Activated CD4-positive, alpha-beta memory T cell treated with anti-CD3 and anti-CD28 coated beads for 36 hours (primary cell): ENCODE measurements at regions of chr1 and their contacts with region 1.

Region 1: DNA sequence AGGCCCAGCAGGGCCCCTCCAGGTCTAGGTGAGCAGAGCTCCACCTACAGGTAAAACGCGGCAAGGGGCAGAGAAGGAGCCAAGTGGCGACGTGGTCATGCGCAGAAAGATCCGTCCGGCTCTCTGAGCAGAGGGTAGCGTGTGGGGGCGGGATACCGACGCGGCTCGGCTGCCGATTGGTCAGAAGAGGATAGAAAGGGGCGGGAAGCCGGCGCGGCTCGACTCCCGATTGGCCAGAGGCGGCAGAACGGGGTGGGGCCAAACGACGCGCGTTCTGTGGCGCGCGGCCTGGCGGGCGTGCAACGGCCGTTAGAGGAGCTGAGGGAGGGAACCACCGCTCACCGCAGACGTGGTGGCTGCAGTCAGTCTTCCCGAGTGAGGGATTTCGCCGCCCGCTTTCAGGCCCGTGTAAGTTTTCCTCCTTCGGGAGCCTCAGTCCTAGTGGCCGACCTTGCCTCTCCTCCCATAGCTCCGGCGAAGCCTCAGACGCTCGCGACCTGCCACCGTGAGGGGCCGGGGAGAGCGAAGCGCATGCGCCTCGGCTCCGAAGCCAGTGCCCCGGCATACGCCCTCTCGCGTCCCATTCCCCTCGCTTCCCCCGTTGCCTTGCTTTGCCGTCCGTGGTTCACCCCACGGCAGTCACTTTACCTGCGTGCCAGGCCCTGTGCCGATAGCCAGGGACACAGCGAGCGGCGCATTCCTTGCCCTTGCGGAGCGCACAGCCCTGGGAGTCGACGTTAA is at the start of gene CEP85:
- DNase-seq: peak; percentile 99
- H3K4me3 Mint-ChIP-seq: peak within 1 kb of the TSS; percentile 96
- H3K27ac Mint-ChIP-seq: peak within 1 kb of the TSS; percentile 86
- H3K4me1 Mint-ChIP-seq: peaks cover 36% of the 10 kb centered on the region
- H3K27me3 Mint-ChIP-seq: no peaks in the 10 kb centered on the region
- total RNA-seq, gene CEP85: 30.3 to 32.6 TPM

Region 2: GRCh38 chr1:25971066-25971810 is 262.8 kb before region 1 on chr1:
- CTCF ChIA-PET with region 1: no interaction called
- POLR2A ChIA-PET with region 1: no interaction called
- intact Hi-C with region 1: no loop called
- DNase-seq: peak; percentile 29
- H3K4me3 Mint-ChIP-seq: peak overlapping the region; percentile 4
- H3K27ac Mint-ChIP-seq: peak overlapping the region; percentile 90
- H3K4me1 Mint-ChIP-seq: peaks cover 22% of the 10 kb centered on the region
- H3K27me3 Mint-ChIP-seq: no peaks in the 10 kb centered on the region

Region 3: DNA sequence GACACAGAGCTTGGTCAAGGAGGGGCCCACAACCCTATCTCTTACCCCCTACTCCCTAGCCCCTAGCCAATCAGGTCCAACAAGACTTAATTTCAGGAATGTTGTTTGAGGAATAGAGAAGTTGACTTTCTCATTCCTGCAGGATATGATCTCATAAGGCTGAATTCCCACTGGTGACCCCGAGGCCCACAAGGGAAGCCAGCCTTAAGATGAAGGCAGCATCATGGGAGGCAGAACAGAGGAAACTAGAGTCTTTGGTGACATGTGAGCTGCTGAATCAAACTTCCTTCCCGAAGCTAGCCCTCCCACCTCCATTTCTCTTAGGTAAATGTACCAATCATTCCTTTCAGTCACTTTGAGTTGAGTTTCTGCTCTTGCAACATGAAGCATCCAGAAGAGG is 131.5 kb before region 1 on chr1:
- CTCF ChIA-PET with region 1: interaction called, 7 read pairs
- POLR2A ChIA-PET with region 1: no interaction called
- intact Hi-C with region 1: loop called (anchors 1 kb)
- DNase-seq: no peak
- H3K4me3 Mint-ChIP-seq: no peak overlapping the region
- H3K27ac Mint-ChIP-seq: no peak overlapping the region
- H3K4me1 Mint-ChIP-seq: peaks cover 7% of the 10 kb centered on the region
- H3K27me3 Mint-ChIP-seq: no peaks in the 10 kb centered on the region

Region 4: GRCh38 chr1:26145041-26145959 is 88.8 kb before region 1 on chr1:
- CTCF ChIA-PET with region 1: interaction called, 16 read pairs
- POLR2A ChIA-PET with region 1: no interaction called
- intact Hi-C with region 1: no loop called
- DNase-seq: peak; percentile 83
- H3K4me3 Mint-ChIP-seq: no peak overlapping the region
- H3K27ac Mint-ChIP-seq: no peak overlapping the region
- H3K4me1 Mint-ChIP-seq: peaks cover 4% of the 10 kb centered on the region
- H3K27me3 Mint-ChIP-seq: no peaks in the 10 kb centered on the region

Region 5: GRCh38 chr1:26190373-26190987 is 43.6 kb before region 1 on chr1 and contains the start of gene CATSPER4:
- CTCF ChIA-PET with region 1: interaction called, 10 read pairs
- POLR2A ChIA-PET with region 1: no interaction called
- intact Hi-C with region 1: no loop called
- DNase-seq: no peak
- H3K4me3 Mint-ChIP-seq: no peak within 1 kb of the TSS
- H3K27ac Mint-ChIP-seq: no peak within 1 kb of the TSS
- H3K4me1 Mint-ChIP-seq: peaks cover 10% of the 10 kb centered on the region
- H3K27me3 Mint-ChIP-seq: no peaks in the 10 kb centered on the region
- total RNA-seq, gene CATSPER4: not detected

Region 6: DNA sequence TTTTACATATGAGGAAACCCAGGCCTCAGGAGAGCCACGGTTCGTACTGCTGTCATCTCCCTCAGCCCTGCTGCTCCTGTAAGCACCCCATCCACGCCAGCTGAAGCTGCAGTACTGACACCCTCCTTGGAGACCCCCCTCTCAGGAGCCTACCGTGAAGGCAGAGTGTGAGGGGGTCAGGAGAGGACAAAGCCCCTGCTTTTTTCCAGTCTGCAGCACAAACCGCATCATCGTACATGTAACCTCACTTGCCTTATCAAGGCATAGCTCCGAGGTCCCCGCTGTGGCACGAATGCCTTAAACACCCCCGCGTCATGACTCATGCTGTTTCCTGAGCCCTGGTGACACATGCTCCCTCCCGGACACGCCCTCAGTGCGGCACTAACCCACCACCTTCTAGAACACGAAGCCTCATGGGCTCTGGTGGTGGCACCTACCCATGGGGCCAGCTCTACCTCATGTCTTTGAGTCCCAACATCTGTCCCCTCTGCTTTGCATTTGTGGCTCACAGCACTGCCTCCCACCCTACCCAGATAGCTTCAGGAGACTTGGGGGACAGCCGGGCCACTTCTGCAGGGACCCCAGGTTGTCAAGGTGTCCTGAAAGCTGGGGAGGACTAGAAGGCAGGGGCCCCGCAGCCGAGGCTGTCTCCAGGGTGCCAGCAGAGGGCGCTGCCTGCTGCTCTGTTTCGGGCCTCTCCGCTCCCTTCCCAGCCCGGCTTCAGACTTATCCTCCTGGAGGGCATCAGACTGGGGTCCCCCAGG is 50.7 kb after region 1 on chr1:
- CTCF ChIA-PET with region 1: interaction called, 16 read pairs
- POLR2A ChIA-PET with region 1: interaction called, 4 read pairs
- intact Hi-C with region 1: no loop called
- DNase-seq: peak; percentile 98
- H3K4me3 Mint-ChIP-seq: peak overlapping the region; percentile 68
- H3K27ac Mint-ChIP-seq: peak overlapping the region; percentile 98
- H3K4me1 Mint-ChIP-seq: peaks cover 90% of the 10 kb centered on the region
- H3K27me3 Mint-ChIP-seq: no peaks in the 10 kb centered on the region

Region 7: GRCh38 chr1:26363549-26364448 is 129.7 kb after region 1 on chr1:
- CTCF ChIA-PET with region 1: interaction called, 15 read pairs
- POLR2A ChIA-PET with region 1: no interaction called
- intact Hi-C with region 1: no loop called
- DNase-seq: peak; percentile 91
- H3K4me3 Mint-ChIP-seq: peak overlapping the region; percentile 8
- H3K27ac Mint-ChIP-seq: peak overlapping the region; percentile 58
- H3K4me1 Mint-ChIP-seq: peaks cover 41% of the 10 kb centered on the region
- H3K27me3 Mint-ChIP-seq: peaks cover 7% of the 10 kb centered on the region